SK-N-SH (cell line): ENCODE measurements at regions of chr16 and their contacts with region 1.

Region 1: DNA sequence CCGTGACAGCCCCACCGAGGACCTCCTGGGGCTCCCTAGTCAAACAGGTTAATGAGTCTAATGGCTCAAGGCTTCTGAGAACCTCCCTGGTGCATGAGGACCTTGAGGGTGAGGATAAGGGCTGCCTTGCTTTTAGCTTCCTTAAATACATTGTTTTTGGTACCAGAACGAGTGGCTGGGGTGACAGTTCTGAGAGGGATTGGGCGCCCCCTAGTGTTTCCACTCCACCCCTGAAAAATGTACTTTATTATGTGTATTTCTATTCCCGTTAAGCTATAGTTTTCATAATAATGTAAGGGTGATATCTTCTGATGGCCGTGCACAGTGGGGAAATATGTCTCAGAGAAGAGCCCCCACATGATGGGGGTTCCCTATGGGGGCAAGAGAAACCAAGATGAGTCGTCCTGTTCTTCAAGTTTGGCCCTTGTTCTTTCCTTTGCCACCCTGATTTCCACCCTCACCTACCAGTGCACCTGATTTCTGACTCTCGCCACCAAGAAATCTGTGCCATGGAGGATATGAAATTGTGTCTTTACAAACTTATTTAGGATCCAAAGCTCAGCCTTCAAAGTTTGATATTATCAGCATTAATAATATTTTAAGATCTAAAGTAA is 14.5 kb upstream of the VWA3A start:
- DNase-seq: peak; percentile 69
- H3K4me3 ChIP-seq: no peak overlapping the region; a peak in 1 of 4 replicates
- H3K27ac ChIP-seq: no peak overlapping the region
- H3K4me1 ChIP-seq: no peaks in the 10 kb centered on the region
- H3K27me3 ChIP-seq: no peaks in the 10 kb centered on the region
- CTCF ChIP-seq: peak; percentile 94
- EP300 ChIP-seq: no peak
- RAD21 ChIP-seq: peak; percentile 83

Region 2: DNA sequence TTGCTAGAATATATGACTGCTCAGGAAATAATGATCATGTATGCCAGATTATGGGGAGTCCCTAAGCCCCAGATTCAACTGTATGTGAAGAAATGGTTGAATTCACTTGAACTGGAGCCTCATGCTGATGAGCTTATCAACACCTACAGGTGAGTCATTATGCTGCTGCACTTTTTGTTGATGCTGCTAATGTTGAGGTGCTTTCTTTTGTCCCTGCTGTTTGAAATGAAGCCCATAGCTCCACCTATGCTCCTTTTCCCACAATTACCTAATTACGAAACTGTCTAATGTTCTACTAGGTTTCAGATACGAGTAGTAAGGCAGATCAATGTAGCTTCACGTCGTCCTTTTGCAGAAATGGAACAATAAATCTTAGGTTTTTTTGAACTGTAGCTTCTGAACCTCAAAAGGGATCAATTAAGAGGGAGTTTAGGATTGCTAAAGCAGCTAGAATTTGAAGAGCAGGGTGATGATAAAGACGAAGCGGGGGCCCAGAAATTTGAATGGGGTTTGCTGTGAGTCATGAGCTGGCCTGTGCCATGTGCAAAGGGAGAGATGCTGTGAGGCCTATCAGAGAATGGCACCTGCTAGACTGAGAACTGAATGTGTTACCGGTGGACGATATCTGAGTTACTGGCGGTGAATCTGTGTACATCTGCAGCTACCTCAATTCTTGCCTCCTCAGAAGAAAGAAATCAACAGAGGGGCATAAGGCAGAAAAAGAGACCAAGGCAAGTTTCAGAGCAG is 130.7 kb before region 1 on chr16:
- CTCF ChIA-PET with region 1: interaction called, 13 read pairs
- POLR2A ChIA-PET with region 1: no interaction called
- DNase-seq: no peak
- H3K4me3 ChIP-seq: no peak overlapping the region
- H3K27ac ChIP-seq: no peak overlapping the region
- H3K4me1 ChIP-seq: peaks cover 5 to 10% of the 10 kb centered on the region in 2 experiments; a peak in 3 of 4 replicates
- H3K27me3 ChIP-seq: no peaks in the 10 kb centered on the region
- CTCF ChIP-seq: no peak
- EP300 ChIP-seq: no peak
- RAD21 ChIP-seq: no peak

Region 3: DNA sequence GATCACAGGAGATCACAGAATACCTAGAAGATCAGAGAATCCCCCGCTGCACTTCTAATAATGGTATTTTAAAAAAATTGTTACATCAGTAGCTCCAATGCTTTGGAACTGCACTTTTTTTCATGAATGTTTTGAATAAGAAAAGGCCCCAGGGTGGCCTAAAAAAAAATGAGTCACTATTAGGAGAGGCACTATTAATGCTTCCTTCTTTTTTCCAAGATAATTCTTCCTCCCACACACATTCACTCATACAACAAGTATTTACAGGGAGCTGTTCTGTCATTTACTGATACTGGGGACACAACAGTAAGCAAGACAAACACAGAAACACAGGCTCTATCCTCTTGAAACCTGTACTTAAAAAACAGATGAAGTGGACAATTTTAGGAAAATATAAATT is 76.2 kb before region 1 on chr16:
- CTCF ChIA-PET with region 1: interaction called, 209 read pairs
- POLR2A ChIA-PET with region 1: no interaction called
- DNase-seq: no peak
- H3K4me3 ChIP-seq: no peak overlapping the region
- H3K27ac ChIP-seq: no peak overlapping the region
- H3K4me1 ChIP-seq: peaks cover 0 to 4% of the 10 kb centered on the region in 2 experiments; a peak in 1 of 4 replicates
- H3K27me3 ChIP-seq: no peaks in the 10 kb centered on the region
- CTCF ChIP-seq: no peak
- EP300 ChIP-seq: no peak
- RAD21 ChIP-seq: no peak

Region 4: GRCh38 chr16:22035153-22035552 is 42.7 kb before region 1 on chr16:
- CTCF ChIA-PET with region 1: interaction called, 53 read pairs
- POLR2A ChIA-PET with region 1: no interaction called
- DNase-seq: no peak
- H3K4me3 ChIP-seq: no peak overlapping the region
- H3K27ac ChIP-seq: no peak overlapping the region
- H3K4me1 ChIP-seq: no peaks in the 10 kb centered on the region
- H3K27me3 ChIP-seq: no peaks in the 10 kb centered on the region
- CTCF ChIP-seq: no peak
- EP300 ChIP-seq: no peak
- RAD21 ChIP-seq: no peak

Region 5: DNA sequence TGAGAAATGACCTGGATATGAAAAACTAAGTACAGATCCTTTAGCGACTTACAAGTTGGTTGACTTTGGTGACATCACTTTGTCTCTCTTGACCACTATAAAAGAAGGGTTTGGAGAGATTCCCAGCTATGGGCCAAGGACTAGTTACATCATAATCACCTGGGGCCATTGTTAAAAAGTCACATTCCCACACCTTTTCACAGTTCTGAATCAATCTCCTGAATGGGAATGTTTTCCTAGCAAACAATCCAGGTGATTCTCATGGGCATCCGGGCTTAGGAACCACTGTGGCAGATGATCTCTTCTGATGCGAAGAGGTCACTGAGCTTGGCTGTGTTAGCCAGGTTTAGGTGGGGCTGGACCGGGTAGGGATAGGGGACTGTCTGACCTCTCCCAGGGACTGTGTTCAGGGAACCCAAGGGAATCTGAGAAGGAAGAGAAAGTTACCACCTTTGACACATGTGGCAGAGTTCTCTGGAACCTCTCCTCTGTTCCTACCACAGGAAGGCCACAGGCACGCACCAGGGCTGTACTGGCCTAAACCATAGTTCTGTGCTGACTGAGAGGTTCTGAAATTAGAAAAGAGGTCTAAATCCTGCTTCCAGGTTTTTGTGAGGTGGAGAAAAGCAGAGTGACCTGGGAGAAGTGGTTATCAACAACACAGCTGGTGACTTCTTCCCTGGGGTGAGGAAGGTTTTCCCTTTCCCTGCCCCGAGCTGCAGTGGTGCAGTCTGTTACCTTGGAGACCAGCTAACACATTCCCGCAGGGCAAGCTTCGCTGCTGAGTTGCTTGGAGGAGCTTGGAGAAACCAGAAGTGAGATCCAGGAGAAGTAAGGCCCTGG is 14.2 kb after region 1 on chr16 and contains the start of gene VWA3A:
- CTCF ChIA-PET with region 1: interaction called, 87 read pairs
- POLR2A ChIA-PET with region 1: interaction called, 5 read pairs
- DNase-seq: no peak
- H3K4me3 ChIP-seq: no peak within 1 kb of the TSS
- H3K27ac ChIP-seq: no peak within 1 kb of the TSS
- H3K4me1 ChIP-seq: no peaks in the 10 kb centered on the region; a peak in 1 of 4 replicates
- H3K27me3 ChIP-seq: no peaks in the 10 kb centered on the region; the same call in 1 of the 2 replicates
- CTCF ChIP-seq: no peak
- EP300 ChIP-seq: no peak
- RAD21 ChIP-seq: no peak
- polyA plus RNA-seq, gene VWA3A: not detected in 2 replicates

Region 6: DNA sequence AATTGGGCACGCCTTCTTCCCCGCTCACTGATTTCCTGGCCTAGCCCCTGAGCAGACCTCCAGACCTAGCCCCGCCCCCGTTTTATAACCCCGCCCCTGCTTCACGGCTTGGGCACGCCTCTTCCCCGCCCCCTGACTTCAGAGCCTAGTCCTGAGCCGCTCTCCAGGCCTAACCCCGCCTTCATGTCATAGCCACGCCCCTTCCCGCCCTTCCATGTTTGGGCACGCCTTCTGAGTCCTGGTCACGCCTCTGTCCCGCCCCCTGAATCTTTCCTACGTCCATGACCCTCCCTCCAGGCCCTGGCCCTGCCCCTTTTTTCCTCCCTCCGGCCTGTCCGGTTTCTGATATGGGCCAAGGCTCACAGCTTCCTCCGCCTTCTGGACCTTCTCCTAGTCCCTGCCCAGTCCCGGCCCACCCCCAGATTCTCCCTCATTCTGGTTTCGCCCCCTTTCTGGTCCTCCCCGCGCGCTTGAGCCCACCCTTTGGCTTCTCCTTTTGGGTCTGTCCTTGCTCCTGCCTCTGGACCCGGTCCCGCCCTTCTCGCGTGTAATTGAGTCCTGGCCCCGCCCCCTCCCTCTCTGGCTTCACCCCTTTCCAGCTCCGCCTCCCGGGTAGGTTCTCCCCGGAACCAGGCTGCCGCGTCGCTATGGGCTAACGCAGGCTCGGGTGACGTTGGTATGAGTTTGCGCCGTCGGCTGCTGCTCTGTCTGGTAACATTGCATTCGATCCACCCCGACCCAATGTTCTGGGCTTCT is 113.1 kb after region 1 on chr16:
- CTCF ChIA-PET with region 1: interaction called, 22 read pairs
- POLR2A ChIA-PET with region 1: no interaction called
- DNase-seq: peak; percentile 83
- H3K4me3 ChIP-seq: peak overlapping the region; percentile 58 to 62
- H3K27ac ChIP-seq: peak overlapping the region; percentile 85
- H3K4me1 ChIP-seq: peaks cover 3 to 26% of the 10 kb centered on the region in 2 experiments; a peak in 2 of 4 replicates
- H3K27me3 ChIP-seq: no peaks in the 10 kb centered on the region
- CTCF ChIP-seq: no peak
- EP300 ChIP-seq: no peak
- RAD21 ChIP-seq: no peak